Activated CD4-positive, alpha-beta memory T cell treated with anti-CD3 and anti-CD28 coated beads for 36 hours (primary cell): ENCODE measurements at regions of chr12 and their contacts with region 1.

Region 1: GRCh38 chr12:57111031-57111734 is at the start of gene STAT6:
- DNase-seq: peak; percentile 89
- H3K4me3 Mint-ChIP-seq: peak within 1 kb of the TSS; percentile 90
- H3K27ac Mint-ChIP-seq: peak within 1 kb of the TSS; percentile 95
- H3K4me1 Mint-ChIP-seq: peaks cover 49% of the 10 kb centered on the region
- H3K27me3 Mint-ChIP-seq: no peaks in the 10 kb centered on the region
- total RNA-seq, gene STAT6: 209 to 218 TPM

Region 2: DNA sequence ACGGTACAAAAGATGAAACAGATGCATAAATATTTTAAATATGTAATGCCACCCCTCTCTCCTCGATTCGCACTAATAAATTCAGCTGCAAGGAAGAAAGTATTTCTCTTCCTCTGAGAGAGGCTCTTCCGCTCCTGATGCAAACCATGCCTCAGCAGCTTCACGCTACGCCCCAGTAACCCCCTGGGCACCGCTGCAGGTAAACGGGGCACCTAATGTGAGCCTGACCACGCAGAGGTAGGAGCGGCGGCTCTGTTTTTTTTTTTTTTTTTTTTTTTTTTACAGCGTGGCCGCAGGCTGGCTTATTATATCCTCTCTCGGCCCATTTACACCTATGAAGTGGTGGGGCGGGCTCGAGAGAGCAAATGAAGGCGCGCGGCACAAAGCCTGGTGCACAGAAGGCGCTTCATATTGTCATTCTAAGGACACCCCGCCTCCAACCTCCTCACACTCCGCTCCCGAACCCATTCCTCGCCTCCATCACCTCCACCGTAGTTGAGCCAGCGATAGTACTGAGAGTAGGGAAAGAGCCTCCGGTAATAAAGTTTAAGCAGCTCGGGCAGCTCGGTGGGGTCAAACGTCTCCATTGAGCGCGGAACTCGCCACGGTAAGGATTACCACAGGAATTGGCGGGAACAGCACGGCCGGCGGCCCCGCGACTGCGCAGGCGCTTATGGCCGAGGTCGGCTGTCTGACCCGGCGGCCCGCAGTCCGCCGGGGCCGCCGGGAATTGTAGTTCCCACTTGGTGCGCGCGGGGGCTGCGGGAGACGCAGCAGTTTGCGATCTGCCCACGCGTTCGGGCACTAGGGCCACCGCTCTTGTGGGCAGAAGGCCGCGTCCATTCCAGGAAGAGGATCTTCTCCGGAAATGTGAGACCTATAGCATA is 359.2 kb before region 1 on chr12 and contains the start of gene PRIM1:
- CTCF ChIA-PET with region 1: interaction called, 19 read pairs
- POLR2A ChIA-PET with region 1: no interaction called
- intact Hi-C with region 1: loop called (anchors 1 kb)
- DNase-seq: peak; percentile 94
- H3K4me3 Mint-ChIP-seq: peak within 1 kb of the TSS; percentile 99
- H3K27ac Mint-ChIP-seq: peak within 1 kb of the TSS; percentile 99
- H3K4me1 Mint-ChIP-seq: peaks cover 32% of the 10 kb centered on the region
- H3K27me3 Mint-ChIP-seq: no peaks in the 10 kb centered on the region
- total RNA-seq, gene PRIM1: 74.5 to 75.3 TPM

Region 3: DNA sequence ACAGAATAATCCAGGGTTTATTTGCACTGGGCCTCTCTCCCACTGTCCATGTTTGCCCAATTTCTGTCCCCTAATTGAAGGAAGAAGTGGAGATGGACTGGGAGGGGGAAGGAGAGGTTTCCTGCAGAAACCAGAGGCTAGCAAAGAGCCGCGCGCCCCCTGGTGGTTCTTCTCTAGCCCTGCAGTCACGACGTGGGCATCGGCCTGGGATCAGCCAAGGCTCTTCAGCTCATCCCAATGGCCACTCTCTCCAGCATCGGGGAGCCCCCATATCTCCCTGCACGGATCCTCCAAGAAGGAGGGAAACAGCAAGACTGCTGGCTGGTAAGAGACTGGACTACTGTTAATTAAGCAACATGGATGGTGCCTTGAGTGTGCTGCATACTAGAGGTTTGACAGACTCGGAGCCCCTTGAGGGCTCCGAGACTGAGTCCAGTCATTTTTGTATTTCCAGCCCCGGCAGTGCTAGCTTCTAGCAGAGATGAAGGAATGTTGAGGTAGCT is 123.6 kb before region 1 on chr12:
- CTCF ChIA-PET with region 1: interaction called, 23 read pairs
- POLR2A ChIA-PET with region 1: no interaction called
- intact Hi-C with region 1: no loop called
- DNase-seq: peak; percentile 82
- H3K4me3 Mint-ChIP-seq: no peak overlapping the region
- H3K27ac Mint-ChIP-seq: no peak overlapping the region
- H3K4me1 Mint-ChIP-seq: peaks cover 9% of the 10 kb centered on the region
- H3K27me3 Mint-ChIP-seq: no peaks in the 10 kb centered on the region

Region 4: GRCh38 chr12:57031138-57031725 is 80.0 kb before region 1 on chr12:
- CTCF ChIA-PET with region 1: interaction called, 15 read pairs
- POLR2A ChIA-PET with region 1: interaction called, 4 read pairs
- intact Hi-C with region 1: no loop called
- DNase-seq: peak; percentile 35
- H3K4me3 Mint-ChIP-seq: no peak overlapping the region
- H3K27ac Mint-ChIP-seq: no peak overlapping the region
- H3K4me1 Mint-ChIP-seq: peaks cover 35% of the 10 kb centered on the region
- H3K27me3 Mint-ChIP-seq: no peaks in the 10 kb centered on the region

Region 5: DNA sequence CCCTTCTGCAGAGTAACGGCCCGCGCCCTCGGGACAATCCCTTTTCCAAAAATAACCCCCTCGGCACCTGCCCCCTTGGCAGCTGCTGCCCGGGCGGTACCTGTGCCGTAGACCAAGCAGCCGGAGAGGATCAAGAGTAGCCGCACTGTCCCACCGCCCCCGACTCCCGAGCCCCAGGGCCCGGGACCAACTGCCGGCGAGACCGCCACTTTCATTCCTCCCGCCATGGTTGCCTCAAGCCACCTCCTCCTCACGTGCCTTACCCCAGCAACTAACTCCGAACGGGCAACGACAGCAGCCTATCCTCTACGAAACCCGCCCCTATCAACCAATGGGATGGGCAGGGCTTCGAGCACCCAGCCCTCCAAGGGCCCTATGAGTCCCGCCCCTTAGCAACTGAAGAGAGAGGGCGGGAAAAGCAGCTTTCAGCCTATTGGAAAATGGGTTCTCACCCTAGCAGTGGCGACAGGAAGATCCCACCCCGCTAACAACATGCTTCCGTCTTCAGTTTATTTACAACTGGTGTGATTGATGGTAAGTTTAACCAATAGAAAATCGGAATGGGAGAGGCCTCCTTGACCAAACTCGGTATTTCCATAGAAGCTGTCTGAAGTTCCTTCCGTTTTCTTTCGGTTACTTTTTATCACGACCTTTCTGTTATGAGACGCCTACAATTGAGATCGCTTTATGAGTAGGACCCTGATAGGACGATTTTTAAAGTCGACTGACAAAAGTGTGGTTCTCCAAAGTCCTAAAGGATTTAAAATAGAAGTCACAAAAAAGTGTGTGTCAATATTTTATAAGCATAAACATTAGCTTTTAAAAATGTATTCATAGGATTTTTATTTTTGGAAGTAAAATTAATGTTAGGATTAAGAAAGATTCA is 32.4 kb before region 1 on chr12 and contains the start of gene NEMP1:
- CTCF ChIA-PET with region 1: interaction called, 261 read pairs
- POLR2A ChIA-PET with region 1: interaction called, 41 read pairs
- intact Hi-C with region 1: loop called (anchors 1 kb)
- DNase-seq: peak; percentile 98
- H3K4me3 Mint-ChIP-seq: peak within 1 kb of the TSS; percentile 99
- H3K27ac Mint-ChIP-seq: peak within 1 kb of the TSS; percentile 97
- H3K4me1 Mint-ChIP-seq: peaks cover 36% of the 10 kb centered on the region
- H3K27me3 Mint-ChIP-seq: no peaks in the 10 kb centered on the region
- total RNA-seq, gene NEMP1: 70.6 to 73.5 TPM

Region 6: GRCh38 chr12:57175428-57176138 is 64.4 kb after region 1 on chr12:
- CTCF ChIA-PET with region 1: interaction called, 22 read pairs
- POLR2A ChIA-PET with region 1: no interaction called
- intact Hi-C with region 1: no loop called
- DNase-seq: peak; percentile 72
- H3K4me3 Mint-ChIP-seq: no peak overlapping the region
- H3K27ac Mint-ChIP-seq: no peak overlapping the region
- H3K4me1 Mint-ChIP-seq: no peaks in the 10 kb centered on the region
- H3K27me3 Mint-ChIP-seq: no peaks in the 10 kb centered on the region

Region 7: DNA sequence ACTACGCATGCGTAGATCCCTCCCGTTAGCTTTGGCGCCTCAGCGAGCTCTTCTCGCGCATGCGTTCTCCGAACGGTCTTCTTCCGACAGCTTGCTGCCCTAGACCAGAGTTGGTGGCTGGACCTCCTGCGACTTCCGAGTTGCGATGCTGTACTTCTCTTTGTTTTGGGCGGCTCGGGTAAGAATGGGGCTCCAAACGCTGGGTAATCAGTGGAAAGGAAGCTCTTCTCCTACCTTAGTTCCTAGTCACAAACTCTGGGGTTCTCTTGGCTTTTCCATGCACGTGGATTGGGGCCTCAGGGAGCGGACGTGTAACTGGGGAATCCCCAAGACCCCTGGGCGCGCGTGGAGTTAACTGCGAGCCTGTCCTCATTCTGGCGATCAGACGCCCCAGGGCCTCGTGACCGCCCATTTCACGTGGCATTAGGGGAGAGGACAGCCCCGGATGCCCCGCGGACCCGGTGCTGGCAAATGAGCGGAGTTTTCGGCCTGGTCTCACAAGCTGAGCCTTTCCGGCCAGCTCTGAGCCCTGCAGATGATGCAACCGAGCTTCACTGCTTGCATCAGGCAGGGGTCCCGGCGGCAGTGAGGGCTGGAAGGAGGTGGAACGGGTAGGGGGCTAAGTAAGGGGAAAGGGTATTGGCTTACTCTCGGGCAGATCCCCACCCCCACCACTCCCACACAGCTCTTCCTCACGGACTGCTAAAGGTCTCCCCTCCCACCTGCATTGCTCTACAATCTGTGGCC is 118.6 kb after region 1 on chr12 and contains the start of gene SHMT2:
- CTCF ChIA-PET with region 1: interaction called, 7 read pairs
- POLR2A ChIA-PET with region 1: interaction called, 12 read pairs
- intact Hi-C with region 1: no loop called
- DNase-seq: peak; percentile 96
- H3K4me3 Mint-ChIP-seq: peak within 1 kb of the TSS; percentile 98
- H3K27ac Mint-ChIP-seq: peak within 1 kb of the TSS; percentile 94
- H3K4me1 Mint-ChIP-seq: peaks cover 56% of the 10 kb centered on the region
- H3K27me3 Mint-ChIP-seq: peaks cover 20% of the 10 kb centered on the region
- total RNA-seq, gene SHMT2: 401 to 404 TPM